BJ (cell line): ENCODE measurements at regions of chr1 and their contacts with region 1.

Region 1: DNA sequence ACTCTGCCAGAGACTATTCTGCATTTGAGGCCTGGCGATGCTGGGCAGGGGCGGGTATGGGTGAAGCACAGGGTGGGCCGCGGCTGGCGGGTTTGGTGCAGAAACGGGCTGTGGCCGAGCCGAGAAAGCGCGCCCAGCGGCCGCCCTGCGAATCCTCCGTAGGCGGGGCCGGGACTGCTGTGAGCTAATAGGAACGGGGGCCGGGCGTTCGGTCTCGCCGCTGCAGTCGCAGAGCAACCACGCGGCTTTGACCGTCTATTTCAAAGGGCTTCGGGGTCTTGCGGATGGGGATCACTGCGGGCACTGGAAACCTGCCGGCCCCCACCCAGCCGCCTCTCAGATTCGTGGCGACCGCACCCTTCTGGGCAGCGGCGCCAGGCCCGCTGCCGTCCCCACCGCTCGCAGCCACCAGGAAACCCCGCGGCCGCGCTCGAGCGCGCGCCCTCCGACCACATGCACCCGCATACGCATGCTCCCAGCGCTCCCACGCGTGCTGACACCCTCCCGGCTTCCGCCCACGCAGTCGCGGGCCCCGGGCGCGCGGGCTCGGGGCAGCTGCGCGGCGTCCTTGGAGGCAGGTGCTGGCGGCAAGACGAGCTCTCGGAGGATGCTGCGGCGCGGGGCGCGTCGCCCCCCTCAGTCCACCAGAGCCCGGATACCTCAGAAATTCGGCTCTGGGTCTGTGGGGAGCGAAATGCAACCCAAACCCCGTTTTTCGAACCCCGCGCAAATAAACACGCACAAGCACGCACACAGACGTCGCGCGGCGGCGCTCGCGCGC is 32.6 kb downstream of the DNTTIP2 start:
- DNase-seq: no peak
- H3K4me3 ChIP-seq: peak overlapping the region; percentile 84
- H3K27me3 ChIP-seq: no peaks in the 10 kb centered on the region
- CTCF ChIP-seq: peak; percentile 59

Region 2: DNA sequence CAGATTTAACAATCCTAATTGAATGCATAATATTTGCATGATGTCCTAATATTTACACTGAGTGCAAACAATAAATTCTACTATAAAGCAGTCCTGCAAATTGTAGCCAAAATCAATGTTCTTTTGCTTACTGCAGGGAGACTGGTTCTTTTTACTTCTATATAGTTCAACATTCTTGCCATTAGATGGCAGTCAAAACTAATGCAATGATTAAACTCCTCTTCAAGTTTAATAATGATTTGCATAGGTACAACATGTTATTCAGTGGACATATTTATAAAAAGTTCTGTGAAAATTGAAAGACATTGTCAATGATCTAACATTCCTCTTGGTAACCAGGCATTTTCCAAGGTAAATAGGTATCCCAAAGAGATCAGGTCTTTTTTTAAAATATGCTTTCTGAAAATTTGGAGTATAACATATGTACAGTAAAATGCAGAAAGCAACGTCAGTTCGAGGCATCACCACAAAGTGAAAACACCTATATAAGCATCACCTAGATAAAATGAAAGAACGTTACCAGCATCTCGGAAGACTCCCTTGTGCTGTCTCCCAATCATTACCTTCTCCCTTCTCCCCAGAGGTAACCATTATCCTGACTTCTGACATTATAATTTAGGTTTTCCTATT is 408.3 kb before region 1 on chr1:
- CTCF ChIA-PET with region 1: interaction called, 11 read pairs
- POLR2A ChIA-PET with region 1: no interaction called
- DNase-seq: peak; percentile 17
- H3K4me3 ChIP-seq: no peak overlapping the region
- H3K27me3 ChIP-seq: peaks cover 7% of the 10 kb centered on the region
- CTCF ChIP-seq: peak; percentile 56

Region 3: GRCh38 chr1:93827633-93828366 is 18.6 kb before region 1 on chr1:
- CTCF ChIA-PET with region 1: interaction called, 26 read pairs
- POLR2A ChIA-PET with region 1: no interaction called
- DNase-seq: no peak
- H3K4me3 ChIP-seq: no peak overlapping the region
- H3K27me3 ChIP-seq: no peaks in the 10 kb centered on the region
- CTCF ChIP-seq: no peak